ENCODE measurements at regions of chr1 and their contacts with region 1.

Region 1: DNA sequence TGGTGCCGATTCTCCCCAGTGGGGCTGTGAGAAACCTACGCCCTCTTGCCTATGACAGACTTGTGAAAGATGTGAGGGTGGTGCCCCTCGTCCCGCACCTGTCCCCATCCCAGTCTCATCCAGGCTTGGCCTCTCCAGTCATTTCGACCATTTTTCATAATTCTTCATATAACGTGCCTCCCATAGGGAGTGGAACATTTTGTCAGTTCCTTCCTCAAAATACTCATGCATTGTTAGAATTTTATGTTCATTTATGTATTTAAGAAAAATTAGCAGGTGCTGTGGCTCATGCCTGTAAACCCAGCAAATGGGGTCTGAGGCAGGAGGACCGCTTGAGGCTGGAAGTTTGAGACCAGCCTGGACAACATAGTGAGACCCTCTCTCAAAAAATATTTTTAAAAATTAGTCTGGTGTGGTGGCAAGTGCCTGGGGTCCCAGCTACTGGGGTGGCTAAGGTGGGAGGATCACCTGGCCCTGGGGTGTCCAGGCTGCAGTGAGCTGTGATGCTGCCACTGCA is 19.7 kb upstream of the SMPDL3B start:
- DNase-seq: no peak
- H3K4me3 Mint-ChIP-seq: peak overlapping the region; percentile 100
- H3K27ac Mint-ChIP-seq: peak overlapping the region; percentile 99
- H3K4me1 Mint-ChIP-seq: peaks cover 19% of the 10 kb centered on the region
- H3K27me3 Mint-ChIP-seq: no peaks in the 10 kb centered on the region

Region 2: DNA sequence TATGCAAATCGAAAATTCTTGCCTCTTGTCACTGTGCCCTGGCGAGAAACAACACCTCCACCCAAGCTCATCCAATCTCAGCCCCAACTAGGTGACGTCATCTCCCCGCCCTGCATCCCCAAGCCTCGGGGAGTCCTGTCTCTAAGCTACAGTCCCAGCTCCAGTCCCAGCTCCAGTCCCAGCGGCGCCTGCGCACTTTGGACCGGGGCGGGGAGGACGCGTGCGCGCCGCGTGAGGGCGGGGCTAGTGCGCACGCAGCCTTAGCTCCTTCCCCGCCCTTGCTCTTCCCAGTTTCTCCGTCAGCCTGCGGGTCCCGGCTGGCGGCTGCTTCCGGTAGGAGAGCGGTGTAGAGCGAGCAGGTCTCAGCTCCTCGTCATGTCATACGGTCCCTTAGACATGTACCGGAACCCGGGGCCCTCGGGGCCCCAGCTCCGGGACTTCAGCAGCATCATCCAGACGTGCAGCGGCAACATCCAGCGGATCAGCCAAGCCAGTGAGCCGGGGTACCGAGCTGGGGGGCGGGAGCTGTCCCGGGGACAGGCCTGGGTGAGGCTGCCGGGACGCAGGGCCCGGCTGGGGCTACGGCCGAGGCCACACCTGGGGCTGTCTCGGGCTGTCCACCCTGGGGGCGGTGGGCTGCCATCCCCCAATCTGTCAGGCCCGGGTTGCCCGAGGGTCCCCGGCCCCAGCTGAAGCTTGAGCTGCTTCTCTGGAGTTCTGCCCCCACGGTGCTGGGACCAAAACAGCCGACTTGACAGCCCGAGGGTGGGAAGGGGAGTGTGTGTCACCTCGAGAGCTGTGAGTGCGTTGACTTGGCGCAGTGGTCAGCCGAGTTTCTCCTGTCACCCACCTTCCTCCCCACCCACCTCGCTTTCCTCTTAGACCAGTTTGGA is 142.0 kb before region 1 on chr1 and contains the start of gene STX12:
- CTCF ChIA-PET with region 1: no interaction called
- POLR2A ChIA-PET with region 1: no interaction called
- intact Hi-C with region 1: loop called (anchors 2 kb)
- DNase-seq: peak; percentile 100
- H3K4me3 Mint-ChIP-seq: peak within 1 kb of the TSS; percentile 95
- H3K27ac Mint-ChIP-seq: peak within 1 kb of the TSS; percentile 99
- H3K4me1 Mint-ChIP-seq: peaks cover 35% of the 10 kb centered on the region
- H3K27me3 Mint-ChIP-seq: no peaks in the 10 kb centered on the region
- total RNA-seq, gene STX12: 31.8 to 32.0 TPM

Region 3: DNA sequence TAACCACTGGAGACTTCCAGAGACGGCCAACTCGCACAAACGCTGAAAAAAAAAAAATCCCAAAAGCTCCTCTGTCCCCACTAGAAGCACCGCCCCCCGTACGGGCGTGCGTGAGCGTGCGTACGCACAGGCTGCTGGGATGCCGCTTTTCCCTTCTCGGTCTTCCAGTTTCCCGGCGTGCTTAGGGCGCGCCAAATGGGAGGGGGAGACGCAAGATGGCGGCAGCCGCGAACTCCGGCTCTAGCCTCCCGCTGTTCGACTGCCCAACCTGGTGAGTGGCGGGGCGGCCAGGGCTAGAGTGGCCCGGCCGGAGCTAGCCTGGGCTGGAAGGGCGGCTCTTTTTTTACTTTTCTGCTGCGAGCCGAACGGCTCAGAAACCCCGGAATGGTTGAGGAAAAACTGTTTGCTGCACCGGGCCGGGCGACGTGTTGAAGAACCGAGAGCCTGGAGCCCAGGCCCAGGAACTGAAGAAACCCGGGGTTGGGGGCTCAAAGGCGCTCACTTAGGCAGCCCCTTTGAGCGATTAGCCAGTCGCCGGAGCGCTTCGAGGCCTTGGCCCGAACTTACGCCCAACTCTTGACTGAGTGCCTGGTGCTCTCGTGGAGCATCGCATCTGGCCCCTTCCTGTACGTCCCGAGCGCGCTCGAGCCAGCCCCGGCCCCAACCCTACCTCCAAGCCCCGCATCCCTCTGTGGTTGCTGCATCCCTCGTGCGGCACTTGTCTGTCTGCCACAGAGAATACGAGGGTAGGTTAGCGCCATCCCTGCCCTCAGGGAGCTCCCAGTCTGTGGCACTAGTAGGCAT is 84.3 kb before region 1 on chr1 and contains the start of gene PPP1R8:
- CTCF ChIA-PET with region 1: no interaction called
- POLR2A ChIA-PET with region 1: no interaction called
- intact Hi-C with region 1: no loop called
- DNase-seq: peak; percentile 94
- H3K4me3 Mint-ChIP-seq: peak within 1 kb of the TSS; percentile 92
- H3K27ac Mint-ChIP-seq: peak within 1 kb of the TSS; percentile 87
- H3K4me1 Mint-ChIP-seq: peaks cover 34% of the 10 kb centered on the region
- H3K27me3 Mint-ChIP-seq: no peaks in the 10 kb centered on the region
- total RNA-seq, gene PPP1R8: 42.9 to 43.8 TPM

Region 4: DNA sequence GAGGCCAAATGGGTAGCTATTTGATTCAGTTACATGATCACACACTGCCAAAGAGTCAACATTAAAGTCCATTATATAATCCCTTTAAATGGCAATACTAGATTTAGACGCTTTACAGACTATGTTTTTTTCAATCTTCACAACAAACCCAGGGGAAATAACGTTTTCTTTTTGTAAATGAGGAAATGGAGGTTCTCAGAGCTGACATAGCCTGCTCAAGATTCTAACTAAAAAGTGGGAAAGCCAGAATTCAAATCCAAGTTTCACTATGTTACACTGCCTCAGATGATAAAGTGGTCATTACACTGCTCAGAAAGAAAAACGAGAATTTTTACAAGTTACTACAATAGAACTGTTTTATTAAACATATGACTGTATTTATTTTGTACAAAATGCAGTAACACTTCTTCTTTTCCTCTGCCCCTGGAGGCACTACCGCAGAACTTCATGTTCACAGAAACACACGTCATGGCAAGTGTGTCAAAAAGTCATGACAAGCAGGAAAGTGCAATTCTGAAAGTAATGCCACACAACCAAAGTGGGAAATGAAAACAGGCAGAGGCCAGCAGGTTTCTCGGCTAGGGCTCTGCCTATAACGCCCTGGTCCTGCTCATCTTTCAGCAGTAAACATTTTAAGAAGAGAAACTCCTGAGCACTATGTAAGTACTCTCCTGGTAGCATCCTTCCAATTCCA is 23.8 kb before region 1 on chr1:
- CTCF ChIA-PET with region 1: interaction called, 3 read pairs
- POLR2A ChIA-PET with region 1: no interaction called
- intact Hi-C with region 1: loop called (anchors 1 kb)
- DNase-seq: peak; percentile 66
- H3K4me3 Mint-ChIP-seq: no peak overlapping the region
- H3K27ac Mint-ChIP-seq: peak overlapping the region; percentile 86
- H3K4me1 Mint-ChIP-seq: peaks cover 51% of the 10 kb centered on the region
- H3K27me3 Mint-ChIP-seq: no peaks in the 10 kb centered on the region

Region 5: DNA sequence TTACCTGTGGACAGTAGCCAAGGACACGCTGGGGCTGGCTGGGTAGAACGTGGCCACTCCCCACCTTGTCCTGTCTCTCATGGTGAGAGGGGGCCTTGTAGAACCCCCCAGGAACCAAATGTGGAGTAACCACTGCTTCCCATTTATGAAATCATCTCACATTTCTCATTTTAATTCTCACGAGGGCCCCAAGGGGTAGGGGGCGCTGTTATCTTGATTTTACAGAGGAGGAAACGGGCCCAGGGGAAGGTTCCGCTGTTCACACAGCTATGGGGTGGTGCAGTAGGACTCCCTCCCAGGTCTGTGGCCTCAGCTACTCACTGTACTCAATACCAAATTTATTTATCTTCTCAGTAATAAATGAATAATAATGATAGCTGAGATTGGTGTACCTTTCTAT is 25.2 kb after region 1 on chr1:
- CTCF ChIA-PET with region 1: interaction called, 12 read pairs
- POLR2A ChIA-PET with region 1: interaction called, 4 read pairs
- intact Hi-C with region 1: no loop called
- DNase-seq: peak; percentile 84
- H3K4me3 Mint-ChIP-seq: no peak overlapping the region
- H3K27ac Mint-ChIP-seq: peak overlapping the region; percentile 54
- H3K4me1 Mint-ChIP-seq: peaks cover 25% of the 10 kb centered on the region
- H3K27me3 Mint-ChIP-seq: peaks cover 7% of the 10 kb centered on the region

Region 6: DNA sequence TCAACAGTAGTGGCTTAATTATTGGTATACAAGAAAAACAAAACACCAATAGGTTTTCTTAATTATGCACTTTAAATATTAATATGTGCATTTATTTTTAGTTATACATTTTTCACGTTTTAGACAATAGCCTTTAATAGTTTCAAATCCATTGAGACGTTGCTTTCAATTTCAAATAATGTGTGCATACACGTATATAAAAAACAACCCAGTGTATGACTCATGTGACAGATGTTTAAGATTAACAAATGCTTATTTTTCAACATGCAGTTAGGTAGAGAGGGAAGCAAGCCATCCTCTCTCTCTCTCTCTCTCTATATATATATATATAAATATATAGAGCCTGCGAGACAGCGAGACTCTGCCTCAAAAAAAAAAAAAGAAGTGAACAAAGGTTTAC is 148.9 kb after region 1 on chr1:
- CTCF ChIA-PET with region 1: no interaction called
- POLR2A ChIA-PET with region 1: no interaction called
- intact Hi-C with region 1: no loop called
- DNase-seq: no peak
- H3K4me3 Mint-ChIP-seq: no peak overlapping the region
- H3K27ac Mint-ChIP-seq: no peak overlapping the region
- H3K4me1 Mint-ChIP-seq: peaks cover 43% of the 10 kb centered on the region
- H3K27me3 Mint-ChIP-seq: no peaks in the 10 kb centered on the region

Region 7: DNA sequence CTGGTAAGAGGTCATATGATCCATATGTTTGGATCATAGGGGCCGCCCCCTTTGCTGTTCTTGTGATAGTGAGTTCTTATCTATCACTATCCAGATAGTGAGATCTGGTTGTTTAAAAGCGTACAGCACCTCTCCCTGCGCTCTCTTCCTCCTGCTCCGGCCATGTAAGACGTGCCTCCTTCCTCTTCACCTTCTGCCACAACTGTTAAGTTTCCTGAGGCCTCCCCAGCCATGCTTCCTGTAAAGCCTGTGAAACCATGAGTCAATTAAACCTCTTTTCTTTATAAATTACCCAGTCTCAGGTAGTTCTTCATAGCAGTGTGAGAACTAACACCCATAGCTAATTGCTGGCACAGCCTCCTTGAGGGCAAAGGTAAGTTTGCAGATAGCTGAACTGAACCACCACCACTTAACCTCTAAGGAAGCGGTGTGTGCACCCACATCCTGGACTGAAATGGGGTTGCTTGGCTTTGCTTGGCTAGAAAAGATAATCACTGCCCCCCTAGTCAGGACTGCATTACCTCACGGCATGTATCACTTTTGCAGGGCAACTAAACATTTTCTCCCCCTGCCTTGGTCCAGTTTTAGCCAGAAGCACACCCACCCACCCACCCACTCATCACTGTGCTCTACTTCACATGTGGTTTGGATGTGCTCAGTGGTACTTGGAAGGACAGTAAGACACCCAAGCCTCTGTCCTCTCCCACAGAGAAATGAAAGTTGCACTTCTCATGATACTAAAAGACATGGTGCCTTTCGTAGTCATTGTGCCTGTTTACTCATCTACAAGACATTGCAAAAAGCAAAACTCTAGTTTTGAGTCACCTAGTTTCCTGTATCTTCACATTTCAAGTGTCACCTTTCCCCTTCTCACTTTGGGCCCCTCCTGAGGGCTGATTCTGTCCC is 284.4 kb after region 1 on chr1:
- CTCF ChIA-PET with region 1: no interaction called
- POLR2A ChIA-PET with region 1: no interaction called
- intact Hi-C with region 1: loop called (anchors 1 kb)
- DNase-seq: peak; percentile 89
- H3K4me3 Mint-ChIP-seq: peak overlapping the region; percentile 28
- H3K27ac Mint-ChIP-seq: peak overlapping the region; percentile 87
- H3K4me1 Mint-ChIP-seq: peaks cover 41% of the 10 kb centered on the region
- H3K27me3 Mint-ChIP-seq: no peaks in the 10 kb centered on the region